GM12878 (cell line): ENCODE measurements at regions of chr20 and their contacts with region 1.

Region 1: DNA sequence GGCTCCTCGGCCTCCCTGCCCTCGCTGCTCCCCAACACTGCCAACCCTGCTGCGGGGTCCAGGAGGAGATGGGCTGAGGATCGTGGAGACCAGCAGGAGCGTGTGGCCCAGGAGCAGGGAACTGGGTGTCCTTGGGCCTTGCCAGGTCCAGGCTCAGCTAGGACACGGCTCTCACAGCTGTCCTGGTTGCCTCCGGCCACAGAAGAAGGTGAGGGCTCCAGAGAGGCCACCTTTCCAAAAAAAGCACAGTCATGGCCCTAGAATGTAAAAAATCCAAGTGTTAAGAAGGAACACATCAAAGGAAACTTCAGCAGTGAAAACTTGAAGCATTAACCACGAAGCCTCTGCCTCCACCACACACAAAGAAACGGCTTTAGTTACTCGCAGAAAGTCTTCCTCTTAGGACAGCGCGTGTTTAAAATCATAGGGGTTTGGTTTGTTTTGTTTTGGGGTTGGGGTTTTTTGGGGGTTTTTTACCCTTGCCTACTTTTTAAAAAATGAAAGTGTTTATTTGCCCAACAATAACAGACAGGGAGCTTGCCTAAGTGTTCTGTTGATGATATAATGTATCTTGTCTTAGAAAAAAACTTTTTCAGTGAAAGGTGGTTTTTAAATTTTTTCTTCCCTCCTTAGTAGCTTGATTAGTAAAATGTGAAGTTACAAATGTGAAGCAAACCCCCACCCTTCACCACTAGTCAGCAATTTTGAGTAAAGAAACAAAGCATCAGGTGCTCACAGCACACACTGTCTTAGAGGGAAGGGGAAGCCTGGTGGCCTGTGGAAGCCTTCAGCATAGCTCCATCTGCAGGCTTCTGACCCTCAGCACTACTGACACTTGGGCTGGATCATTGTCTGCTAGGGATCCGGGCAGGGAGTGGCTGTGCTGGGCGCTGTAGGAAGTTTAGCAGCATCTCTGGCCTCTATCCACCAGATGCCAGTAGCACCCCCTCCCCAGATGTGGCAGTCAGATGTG is 60.0 kb downstream of the PTPN1 start:
- DNase-seq: peak; percentile 68
- ATAC-seq: peak; percentile 96
- H3K4me3 ChIP-seq: no peak overlapping the region
- H3K27ac ChIP-seq: peak overlapping the region; percentile 83
- H3K4me1 ChIP-seq: peaks cover 25% of the 10 kb centered on the region
- H3K27me3 ChIP-seq: no peaks in the 10 kb centered on the region
- CTCF ChIP-seq: peak; percentile 70 to 90 (median 74)
- EP300 ChIP-seq: peak; percentile 61 to 71; a peak in 2 of 4 replicates
- POLR2A ChIP-seq: peak; percentile 26; the same call in 1 of the 2 replicates
- RAD21 ChIP-seq: peak; percentile 88

Region 2: DNA sequence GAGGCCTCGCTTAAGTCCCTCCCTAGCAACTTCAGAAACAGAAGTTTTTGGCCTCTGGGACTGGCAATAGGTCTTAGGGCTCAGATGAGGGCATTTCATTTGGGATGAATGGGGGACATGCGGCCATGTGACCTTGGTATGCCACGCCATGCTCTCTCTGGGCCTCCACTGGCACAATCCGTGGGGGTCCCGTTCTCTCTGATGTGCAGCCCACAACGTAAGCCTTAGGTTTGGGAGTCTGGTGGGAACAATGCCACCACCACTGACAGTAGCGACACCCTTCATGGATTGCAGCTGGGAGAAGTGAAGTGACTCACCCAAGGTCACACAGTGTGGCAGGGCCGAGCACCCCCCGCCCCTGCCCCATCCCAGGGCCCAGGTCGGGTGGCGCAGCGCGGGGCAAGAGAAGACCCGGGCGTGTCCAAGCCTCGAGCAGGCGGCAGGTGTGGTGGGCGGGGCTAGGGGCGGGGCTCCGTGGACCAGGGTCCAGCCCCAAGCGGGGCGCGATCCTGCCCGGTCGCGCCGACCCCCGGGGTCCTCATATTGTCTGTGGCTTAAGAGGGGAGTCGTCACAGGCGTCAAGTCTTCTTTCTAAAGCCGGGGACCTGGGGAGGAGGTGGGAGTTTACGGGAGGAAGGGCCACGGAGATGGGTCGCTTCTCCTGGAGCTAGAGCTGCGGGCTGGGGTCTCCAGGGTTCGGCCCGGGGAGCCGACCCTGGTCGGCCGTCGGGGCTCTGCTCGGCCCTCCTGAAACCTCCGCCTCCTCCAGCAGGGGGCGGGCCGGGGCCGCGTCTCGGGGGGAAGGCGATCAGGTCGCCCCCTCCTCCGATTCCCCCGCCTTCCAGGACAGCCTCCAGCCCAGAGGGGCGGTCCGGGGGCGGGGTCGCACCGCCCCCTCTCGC is 380.2 kb before region 1 on chr20:
- CTCF ChIA-PET with region 1: interaction called, 4 read pairs
- POLR2A ChIA-PET with region 1: no interaction called
- RAD21 ChIA-PET with region 1: no interaction called
- SMC1A ChIA-PET with region 1: interaction called, 3 read pairs
- in situ Hi-C with region 1: loop called (anchors 5 kb)
- intact Hi-C with region 1: no loop called
- DNase-seq: no peak
- ATAC-seq: peak; percentile 67
- H3K4me3 ChIP-seq: peak overlapping the region; percentile 88
- H3K27ac ChIP-seq: no peak overlapping the region
- H3K4me1 ChIP-seq: peaks cover 7% of the 10 kb centered on the region
- H3K27me3 ChIP-seq: no peaks in the 10 kb centered on the region
- CTCF ChIP-seq: peak; percentile 41 to 76 (median 70)
- EP300 ChIP-seq: no peak
- POLR2A ChIP-seq: no peak
- RAD21 ChIP-seq: peak; percentile 81

Region 3: GRCh38 chr20:50455656-50456470 is 114.3 kb before region 1 on chr20:
- CTCF ChIA-PET with region 1: no interaction called
- POLR2A ChIA-PET with region 1: no interaction called
- RAD21 ChIA-PET with region 1: no interaction called
- SMC1A ChIA-PET with region 1: no interaction called
- in situ Hi-C with region 1: no loop called
- intact Hi-C with region 1: no loop called
- DNase-seq: no peak
- ATAC-seq: no peak
- H3K4me3 ChIP-seq: no peak overlapping the region
- H3K27ac ChIP-seq: no peak overlapping the region
- H3K4me1 ChIP-seq: peaks cover 10% of the 10 kb centered on the region
- H3K27me3 ChIP-seq: no peaks in the 10 kb centered on the region; a peak in 1 of 4 replicates
- CTCF ChIP-seq: no peak
- EP300 ChIP-seq: no peak
- POLR2A ChIP-seq: no peak
- RAD21 ChIP-seq: no peak

Region 4: DNA sequence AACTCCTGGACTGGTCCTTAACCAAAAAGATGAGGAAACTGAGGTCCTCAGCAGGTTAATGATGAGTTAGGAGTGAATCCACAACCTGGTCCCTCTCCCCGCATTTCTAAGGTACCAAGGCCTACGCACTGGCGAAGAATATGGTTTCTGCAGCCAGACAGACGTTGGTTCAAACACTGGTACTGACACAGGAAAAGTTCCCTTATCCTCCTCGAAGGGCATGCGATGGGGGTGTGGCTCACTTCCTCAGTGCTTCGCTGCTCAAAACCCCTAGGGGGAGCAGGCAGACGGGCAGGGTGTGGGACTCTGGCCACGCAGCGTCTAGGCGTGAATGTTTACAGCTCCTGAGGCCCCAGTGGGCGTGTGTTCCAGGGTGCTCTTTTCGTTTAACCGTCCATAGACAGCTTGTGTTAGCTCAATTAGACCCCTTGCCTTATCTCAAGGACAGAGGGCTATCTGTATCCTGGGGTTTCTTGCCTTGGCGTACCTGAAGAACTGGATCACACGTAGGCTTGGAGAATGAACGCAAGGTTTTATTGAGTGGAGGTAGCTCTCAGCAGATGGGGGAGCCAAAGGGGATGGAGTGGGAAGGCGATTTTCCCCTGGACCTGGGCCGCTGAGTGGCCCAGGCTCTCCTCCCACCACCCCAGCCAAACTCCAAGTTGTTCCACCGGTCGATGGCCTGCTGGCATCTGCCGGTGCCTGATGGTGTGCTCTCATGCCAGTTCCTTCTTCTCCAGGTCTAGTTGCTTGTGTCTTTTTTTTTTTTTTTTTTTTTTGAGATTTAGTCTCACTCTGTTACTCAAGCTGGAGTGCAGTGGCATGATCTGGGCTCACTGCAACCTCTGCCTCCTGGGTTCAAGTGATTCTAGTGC is 91.8 kb before region 1 on chr20:
- CTCF ChIA-PET with region 1: interaction called, 26 read pairs
- POLR2A ChIA-PET with region 1: interaction called, 4 read pairs
- RAD21 ChIA-PET with region 1: interaction called, 11 read pairs
- SMC1A ChIA-PET with region 1: interaction called, 2,799 read pairs
- in situ Hi-C with region 1: loop called (anchors 5 kb)
- intact Hi-C with region 1: loop called (anchors 2 kb)
- DNase-seq: no peak
- ATAC-seq: peak; percentile 99
- H3K4me3 ChIP-seq: no peak overlapping the region
- H3K27ac ChIP-seq: no peak overlapping the region
- H3K4me1 ChIP-seq: peaks cover 21% of the 10 kb centered on the region
- H3K27me3 ChIP-seq: no peaks in the 10 kb centered on the region
- CTCF ChIP-seq: peak; percentile 60 to 87 (median 84)
- EP300 ChIP-seq: no peak
- POLR2A ChIP-seq: no peak
- RAD21 ChIP-seq: peak; percentile 79

Region 5: GRCh38 chr20:50484276-50484976 is 85.7 kb before region 1 on chr20:
- CTCF ChIA-PET with region 1: interaction called, 18 read pairs
- POLR2A ChIA-PET with region 1: interaction called, 4 read pairs
- RAD21 ChIA-PET with region 1: interaction called, 11 read pairs
- SMC1A ChIA-PET with region 1: interaction called, 2,799 read pairs
- in situ Hi-C with region 1: no loop called
- intact Hi-C with region 1: loop called (anchors 2 kb)
- DNase-seq: no peak
- ATAC-seq: no peak
- H3K4me3 ChIP-seq: no peak overlapping the region
- H3K27ac ChIP-seq: peak overlapping the region; percentile 54
- H3K4me1 ChIP-seq: peaks cover 30% of the 10 kb centered on the region
- H3K27me3 ChIP-seq: no peaks in the 10 kb centered on the region
- CTCF ChIP-seq: no peak
- EP300 ChIP-seq: no peak
- POLR2A ChIP-seq: no peak
- RAD21 ChIP-seq: peak; percentile 36; the same call in 1 of the 2 replicates

Region 6: DNA sequence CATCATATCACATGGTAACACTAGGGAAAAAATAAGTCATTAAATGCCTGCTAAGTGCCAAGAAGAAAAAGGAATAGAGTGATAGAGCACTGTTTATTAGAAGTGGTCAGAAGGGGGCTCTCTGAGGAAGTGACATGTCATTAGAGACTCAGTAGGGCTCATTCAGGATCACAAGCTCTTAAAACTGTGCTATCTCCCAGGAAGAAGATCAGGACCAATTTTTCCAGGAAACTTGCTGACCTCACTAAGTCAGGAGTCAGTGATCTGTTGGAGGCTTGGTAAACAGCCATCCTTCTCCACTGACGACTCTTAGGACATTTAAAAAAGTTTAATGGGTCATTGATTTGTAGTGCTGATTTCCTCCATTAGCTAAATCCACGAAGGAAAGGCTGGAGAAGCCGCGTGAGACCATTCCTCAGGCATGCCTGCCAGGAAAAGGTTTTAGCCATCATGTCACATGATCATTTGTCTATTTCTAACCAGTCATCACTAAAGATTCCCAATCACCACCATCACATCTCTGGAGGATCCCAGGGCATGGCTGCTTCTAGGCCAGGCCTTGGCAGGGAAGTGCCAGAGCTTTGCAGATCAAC is 65.8 kb before region 1 on chr20:
- CTCF ChIA-PET with region 1: interaction called, 240 read pairs
- POLR2A ChIA-PET with region 1: interaction called, 3 read pairs
- RAD21 ChIA-PET with region 1: interaction called, 54 read pairs
- SMC1A ChIA-PET with region 1: interaction called, 2,799 read pairs
- in situ Hi-C with region 1: no loop called
- intact Hi-C with region 1: no loop called
- DNase-seq: no peak
- ATAC-seq: peak; percentile 64
- H3K4me3 ChIP-seq: no peak overlapping the region
- H3K27ac ChIP-seq: no peak overlapping the region
- H3K4me1 ChIP-seq: peaks cover 29% of the 10 kb centered on the region
- H3K27me3 ChIP-seq: no peaks in the 10 kb centered on the region
- CTCF ChIP-seq: peak; percentile 21 to 43 (median 21); a peak in 3 of 6 replicates
- EP300 ChIP-seq: no peak
- POLR2A ChIP-seq: no peak
- RAD21 ChIP-seq: peak; percentile 49; the same call in 1 of the 2 replicates

Region 7: DNA sequence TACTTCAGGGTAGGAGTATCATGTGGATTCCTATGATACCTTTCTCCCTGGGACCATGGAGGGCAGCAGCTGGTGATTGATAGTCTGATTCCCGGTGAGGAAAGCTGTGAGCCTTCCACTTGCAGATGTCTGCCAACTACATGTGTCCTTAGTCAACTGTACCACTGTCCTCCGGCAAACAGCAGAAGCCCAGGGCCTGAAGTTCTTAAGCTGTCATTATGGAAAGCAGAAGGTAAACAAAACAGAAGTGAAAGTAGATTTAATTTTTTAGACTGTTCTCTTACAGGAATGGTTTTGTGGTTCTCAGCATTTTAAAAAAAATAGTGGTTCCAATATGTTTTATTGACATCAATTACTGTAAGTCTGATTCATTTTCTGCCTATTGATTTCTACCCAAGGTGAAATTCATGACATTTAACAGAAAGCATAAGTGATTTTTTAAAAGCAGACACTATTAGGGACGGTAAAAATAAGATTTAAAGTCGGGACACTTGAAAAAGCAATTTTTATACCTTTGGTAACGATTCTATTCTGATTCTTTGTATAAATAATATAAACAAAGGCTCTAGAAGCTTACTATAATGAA is 23.3 kb before region 1 on chr20:
- CTCF ChIA-PET with region 1: interaction called, 12 read pairs
- POLR2A ChIA-PET with region 1: interaction called, 4 read pairs
- RAD21 ChIA-PET with region 1: interaction called, 5 read pairs
- SMC1A ChIA-PET with region 1: interaction called, 2,799 read pairs
- in situ Hi-C with region 1: no loop called
- intact Hi-C with region 1: no loop called
- DNase-seq: no peak
- ATAC-seq: peak; percentile 77
- H3K4me3 ChIP-seq: peak overlapping the region; percentile 58
- H3K27ac ChIP-seq: peak overlapping the region; percentile 17
- H3K4me1 ChIP-seq: peaks cover 66% of the 10 kb centered on the region
- H3K27me3 ChIP-seq: no peaks in the 10 kb centered on the region
- CTCF ChIP-seq: no peak
- EP300 ChIP-seq: peak in 1 of 2 experiments; percentile 23; a peak in 1 of 4 replicates
- POLR2A ChIP-seq: no peak
- RAD21 ChIP-seq: no peak